Dendritic cell treated with granulocyte-macrophage colony-stimulating factor and Interleukin-4, amounts not matched to agents 40 ng/mL and 50 ng/mL, for 4 days (primary cell): ENCODE measurements at regions of chr16 and their contacts with region 1.

Region 1: DNA sequence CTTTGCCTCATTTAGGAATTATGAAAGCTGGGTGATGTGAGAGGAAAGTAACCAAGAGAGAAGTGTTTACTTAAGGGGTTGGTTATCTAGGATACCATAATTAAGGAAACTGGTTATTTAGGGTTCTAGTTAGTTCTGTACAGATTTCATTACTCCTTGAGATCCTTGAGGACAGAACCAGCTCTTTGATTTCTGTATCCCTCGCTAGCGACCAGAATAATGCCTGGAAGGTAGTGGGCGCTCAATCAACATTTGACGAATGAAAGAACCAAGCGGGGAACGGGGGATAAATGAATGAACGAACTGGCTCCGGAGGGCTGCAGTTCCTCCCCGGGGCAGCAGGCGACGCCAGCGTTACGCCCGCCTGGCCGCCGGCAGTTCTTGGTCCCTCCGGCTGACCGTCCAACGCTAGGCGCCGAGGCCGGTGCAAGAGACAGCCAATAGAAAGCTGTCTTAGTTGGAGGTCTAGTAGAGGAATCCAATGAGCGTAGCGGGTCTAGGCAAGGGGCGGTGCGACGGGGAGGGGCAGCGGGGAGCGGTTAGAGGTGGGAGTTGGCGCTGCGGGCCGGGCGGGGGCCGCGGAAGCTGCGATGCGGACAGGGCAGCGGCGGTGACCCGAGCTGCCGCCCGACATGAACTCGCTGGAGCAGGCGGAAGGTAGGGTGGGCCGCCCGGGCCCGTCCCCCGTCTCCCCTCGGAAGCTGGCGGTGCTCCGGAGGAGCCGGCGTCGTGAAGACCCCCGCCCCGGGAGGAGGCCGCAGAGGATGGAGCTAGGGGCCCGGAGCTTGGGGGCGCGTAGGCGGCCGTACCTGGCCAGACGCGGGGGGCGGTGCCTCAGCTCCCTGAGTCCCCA is at the start of gene CNEP1R1:
- H3K4me3 Mint-ChIP-seq: peak within 1 kb of the TSS; percentile 89
- H3K27ac Mint-ChIP-seq: peak within 1 kb of the TSS; percentile 83
- H3K4me1 Mint-ChIP-seq: peaks cover 2% of the 10 kb centered on the region
- H3K27me3 Mint-ChIP-seq: peaks cover 3% of the 10 kb centered on the region

Region 2: GRCh38 chr16:50038756-50039529 is 14.0 kb after region 1 on chr16:
- intact Hi-C with region 1: loop called (anchors 2 kb)
- H3K4me3 Mint-ChIP-seq: peak overlapping the region; percentile 27
- H3K27ac Mint-ChIP-seq: peak overlapping the region; percentile 83
- H3K4me1 Mint-ChIP-seq: peaks cover 40% of the 10 kb centered on the region
- H3K27me3 Mint-ChIP-seq: no peaks in the 10 kb centered on the region

Region 3: DNA sequence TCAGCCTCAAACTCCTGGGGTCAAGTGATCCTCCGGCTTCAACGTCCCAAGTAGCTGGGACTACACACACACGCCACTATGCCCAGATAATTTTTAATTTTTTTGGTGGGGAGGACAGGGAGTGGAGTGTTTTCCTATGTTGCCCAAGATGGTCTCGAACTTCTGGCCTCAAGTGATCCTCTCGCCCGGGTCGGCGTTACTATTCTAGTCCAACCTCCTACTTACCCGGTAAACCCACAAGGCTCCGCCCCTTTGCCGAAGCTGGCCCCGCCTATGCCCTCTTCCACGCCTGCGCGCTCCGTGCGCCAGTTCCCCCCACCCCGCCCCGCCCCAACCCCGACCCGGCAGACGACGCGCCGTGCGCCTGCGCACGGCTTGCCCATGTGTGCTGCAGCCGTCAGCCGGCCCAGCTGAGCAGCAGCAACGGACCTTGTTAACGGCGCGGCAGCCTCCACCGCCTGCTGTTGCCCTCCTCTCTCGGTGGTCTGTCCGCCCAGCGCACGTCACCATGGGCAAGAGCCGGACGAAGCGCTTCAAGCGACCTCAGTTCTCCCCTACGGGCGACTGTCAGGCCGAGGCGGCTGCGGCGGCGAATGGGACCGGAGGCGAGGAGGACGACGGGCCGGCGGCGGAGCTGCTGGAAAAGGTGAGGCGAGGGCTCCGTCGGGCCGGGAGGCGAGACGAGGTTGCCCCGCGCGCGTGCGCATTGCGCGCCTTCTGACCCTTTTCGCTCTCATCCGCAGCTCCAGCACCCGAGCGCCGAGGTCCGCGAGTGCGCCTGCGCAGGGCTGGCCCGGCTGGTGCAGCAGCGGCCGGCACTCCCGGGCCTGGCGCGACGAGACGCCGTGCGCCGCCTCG is 40.9 kb after region 1 on chr16 and contains the start of gene HEATR3:
- intact Hi-C with region 1: loop called (anchors 1 kb)
- H3K4me3 Mint-ChIP-seq: peak within 1 kb of the TSS; percentile 80
- H3K27ac Mint-ChIP-seq: peak within 1 kb of the TSS; percentile 94
- H3K4me1 Mint-ChIP-seq: peaks cover 33% of the 10 kb centered on the region
- H3K27me3 Mint-ChIP-seq: no peaks in the 10 kb centered on the region

Region 4: DNA sequence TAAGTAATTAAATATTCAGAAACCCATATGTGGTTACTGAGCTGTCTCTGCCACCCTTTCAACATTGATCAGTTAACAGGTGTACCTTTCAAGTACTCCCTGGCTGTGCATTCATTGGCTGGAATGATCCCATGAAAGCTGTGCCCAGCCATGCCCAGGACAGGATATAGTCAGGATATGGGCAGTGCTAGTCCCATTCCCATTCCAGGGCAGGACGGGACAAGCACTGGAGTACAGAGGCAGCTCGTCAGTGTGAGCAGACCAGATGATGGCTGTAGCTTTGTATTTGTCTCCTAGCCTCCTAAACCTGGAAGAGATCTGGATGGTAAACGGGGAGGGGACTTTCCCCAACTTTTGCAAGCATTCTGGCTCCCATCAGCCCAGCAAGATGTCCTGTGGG is 63.4 kb after region 1 on chr16:
- intact Hi-C with region 1: no loop called
- H3K4me3 Mint-ChIP-seq: no peak overlapping the region
- H3K27ac Mint-ChIP-seq: no peak overlapping the region
- H3K4me1 Mint-ChIP-seq: peaks cover 2% of the 10 kb centered on the region
- H3K27me3 Mint-ChIP-seq: no peaks in the 10 kb centered on the region

Region 5: DNA sequence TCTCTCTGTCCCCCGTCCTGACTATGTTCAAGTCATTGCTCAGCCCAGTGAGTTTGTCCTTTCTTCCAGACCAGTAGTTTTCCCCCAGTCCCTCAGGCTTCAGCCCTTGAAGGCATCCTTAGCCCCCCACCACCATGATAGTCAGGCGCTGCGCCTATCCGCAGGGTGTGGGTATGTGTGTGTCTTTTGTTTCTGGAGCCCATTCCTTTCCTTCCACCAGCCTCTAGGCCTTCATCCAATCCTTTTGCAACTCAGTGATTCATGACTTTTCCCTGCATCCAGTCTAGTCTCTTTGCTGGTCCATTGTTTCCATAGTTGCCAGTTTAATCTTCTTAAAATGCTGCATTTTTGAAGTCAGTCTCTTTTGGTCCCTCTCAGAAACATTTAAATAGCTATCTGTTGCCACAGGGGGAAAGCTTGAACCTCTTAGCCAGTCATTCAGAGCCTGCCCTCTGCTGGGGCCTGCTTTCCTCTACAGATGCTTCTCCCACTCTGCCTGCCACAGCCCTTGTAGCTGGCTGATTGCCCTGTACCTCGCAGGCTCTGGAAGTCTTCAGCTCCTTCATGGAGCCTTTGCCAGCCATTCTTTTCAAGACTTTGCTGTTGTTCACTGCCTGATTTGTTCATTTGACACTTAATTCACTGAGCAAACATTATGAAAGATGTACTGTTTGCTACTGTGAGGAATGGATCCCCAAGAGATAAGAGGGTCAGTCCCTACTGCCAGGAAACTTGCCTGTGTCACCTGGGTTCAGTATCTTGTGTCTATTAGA is 185.5 kb after region 1 on chr16:
- intact Hi-C with region 1: loop called (anchors 2 kb)
- H3K4me3 Mint-ChIP-seq: no peak overlapping the region
- H3K27ac Mint-ChIP-seq: peak overlapping the region; percentile 71
- H3K4me1 Mint-ChIP-seq: peaks cover 35% of the 10 kb centered on the region
- H3K27me3 Mint-ChIP-seq: no peaks in the 10 kb centered on the region

Region 6: DNA sequence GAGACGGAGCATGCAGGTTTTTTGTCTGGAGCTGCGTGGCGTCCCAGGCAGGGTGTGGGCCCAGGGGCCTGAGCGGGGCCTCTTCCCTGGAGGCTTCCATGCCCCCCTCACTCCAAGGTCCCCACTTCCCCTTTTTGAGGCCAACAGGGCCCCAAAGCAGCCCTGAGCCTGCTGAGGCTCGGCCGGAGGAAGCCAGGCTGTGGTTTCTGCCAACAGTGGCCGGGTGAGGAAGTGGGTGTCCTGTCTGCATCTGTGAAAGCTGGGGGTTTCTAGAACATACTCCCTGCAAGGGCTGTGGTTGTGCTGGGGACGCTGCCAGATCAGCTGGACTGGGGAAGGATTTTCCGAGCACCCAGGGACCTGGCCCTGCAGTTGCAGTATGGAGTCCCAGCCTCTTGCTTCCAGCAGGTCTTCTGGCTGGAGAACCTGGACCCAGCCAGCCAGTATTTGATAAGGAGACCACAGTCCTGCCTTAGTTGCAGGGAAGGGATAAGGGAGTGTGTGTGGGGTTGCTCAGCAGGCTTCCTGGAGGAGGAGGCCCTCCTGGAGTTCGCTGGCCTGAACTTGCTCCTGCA is 257.1 kb after region 1 on chr16:
- intact Hi-C with region 1: loop called (anchors 10 kb)
- H3K4me3 Mint-ChIP-seq: peak overlapping the region; percentile 87
- H3K27ac Mint-ChIP-seq: peak overlapping the region; percentile 90
- H3K4me1 Mint-ChIP-seq: peaks cover 86% of the 10 kb centered on the region
- H3K27me3 Mint-ChIP-seq: no peaks in the 10 kb centered on the region

Region 7: GRCh38 chr16:50354629-50355456 is 329.9 kb after region 1 on chr16:
- intact Hi-C with region 1: loop called (anchors 2 kb)
- H3K4me3 Mint-ChIP-seq: no peak overlapping the region
- H3K27ac Mint-ChIP-seq: no peak overlapping the region
- H3K4me1 Mint-ChIP-seq: peaks cover 5% of the 10 kb centered on the region
- H3K27me3 Mint-ChIP-seq: no peaks in the 10 kb centered on the region

Region 8: DNA sequence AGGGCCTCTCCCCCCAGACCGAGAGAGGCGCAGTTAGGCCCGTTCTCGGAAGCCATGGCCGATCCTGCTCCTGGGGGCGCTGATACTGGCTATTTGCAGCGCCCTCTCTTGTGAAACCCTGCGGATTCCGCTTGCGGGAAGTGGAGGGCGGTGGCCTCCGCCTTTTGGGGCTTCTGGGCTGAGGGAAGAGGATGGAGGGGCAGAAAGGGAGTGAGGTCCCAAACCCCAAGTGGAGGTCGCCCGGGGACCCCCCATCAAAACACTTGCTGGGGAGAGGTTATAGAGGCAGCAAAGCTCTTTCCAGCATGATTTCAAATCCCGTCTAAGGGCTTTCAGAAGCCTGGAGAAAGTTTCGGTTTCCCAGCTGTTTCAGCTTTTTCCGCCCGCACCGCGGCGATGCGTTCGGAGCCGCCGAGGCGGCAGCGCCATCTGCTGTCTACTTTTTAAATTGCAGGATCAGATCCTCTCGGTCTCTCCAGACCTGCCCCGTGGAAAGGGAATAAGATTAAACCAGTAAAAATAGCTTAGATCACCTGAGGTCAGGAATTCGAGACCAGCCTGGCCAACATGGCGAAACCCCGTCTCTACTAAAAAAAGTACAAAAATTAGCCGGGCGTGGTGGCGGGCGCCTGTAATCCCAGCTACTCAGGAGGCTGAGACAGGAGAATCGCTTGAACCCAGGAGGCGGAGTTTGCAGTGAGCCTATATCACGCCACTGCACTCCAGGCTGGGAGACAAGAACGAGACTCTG is 640.4 kb after region 1 on chr16:
- intact Hi-C with region 1: loop called (anchors 5 kb)
- H3K4me3 Mint-ChIP-seq: peak overlapping the region; percentile 81
- H3K27ac Mint-ChIP-seq: peak overlapping the region; percentile 89
- H3K4me1 Mint-ChIP-seq: peaks cover 41% of the 10 kb centered on the region
- H3K27me3 Mint-ChIP-seq: no peaks in the 10 kb centered on the region